Right ventricle myocardium superior (tissue), 1 donor: ENCODE measurements at regions of chr9 and their contacts with region 1.

Region 1: DNA sequence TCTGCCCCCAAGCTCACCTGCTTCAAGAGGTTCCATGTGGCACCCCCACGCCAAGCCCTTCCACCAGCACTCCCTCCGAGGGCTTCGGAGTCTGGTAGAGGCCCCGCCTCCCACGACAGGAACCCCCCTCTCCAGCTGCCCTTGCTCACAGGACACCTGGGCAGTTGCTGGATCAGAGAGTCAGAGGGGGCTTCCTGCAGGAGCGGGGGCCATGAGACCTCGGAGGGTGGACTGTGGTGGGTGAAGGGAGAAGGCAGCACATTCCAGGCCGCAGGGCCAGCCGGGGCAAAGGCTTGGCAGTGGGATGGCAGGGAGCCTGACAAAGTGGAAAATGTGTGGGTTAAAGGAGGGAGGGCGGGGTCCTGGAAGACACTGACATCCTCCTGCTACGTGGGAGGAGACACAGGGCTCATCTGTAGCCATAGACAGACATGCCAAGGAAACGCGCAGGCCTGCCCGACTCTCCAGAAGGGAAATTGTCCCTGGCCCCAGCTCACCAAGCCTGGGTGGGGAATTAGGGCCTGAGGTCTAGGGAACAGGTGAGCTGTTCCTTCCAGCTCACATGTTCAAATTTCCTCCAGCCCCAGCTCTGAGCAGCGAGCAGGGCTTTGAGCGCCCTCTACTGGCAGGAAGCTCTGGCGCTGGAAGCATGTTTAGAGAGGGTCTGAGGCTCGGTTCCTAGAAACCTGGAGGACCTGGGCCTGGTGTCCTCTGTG is 74.2 kb downstream of the NTNG2 start:
- DNase-seq: peak; percentile 85
- ATAC-seq: peak; percentile 38

Region 2: GRCh38 chr9:131018621-131019020 is 1217.5 kb before region 1 on chr9:
- intact Hi-C with region 1: no loop called
- DNase-seq: no peak
- ATAC-seq: no peak

Region 3: GRCh38 chr9:131310833-131311554 is 925.1 kb before region 1 on chr9:
- intact Hi-C with region 1: no loop called
- DNase-seq: no peak
- ATAC-seq: peak; percentile 44

Region 4: GRCh38 chr9:131762356-131762932 is 473.7 kb before region 1 on chr9:
- intact Hi-C with region 1: loop called (anchors 5 kb)
- DNase-seq: peak; percentile 84
- ATAC-seq: peak; percentile 99

Region 5: DNA sequence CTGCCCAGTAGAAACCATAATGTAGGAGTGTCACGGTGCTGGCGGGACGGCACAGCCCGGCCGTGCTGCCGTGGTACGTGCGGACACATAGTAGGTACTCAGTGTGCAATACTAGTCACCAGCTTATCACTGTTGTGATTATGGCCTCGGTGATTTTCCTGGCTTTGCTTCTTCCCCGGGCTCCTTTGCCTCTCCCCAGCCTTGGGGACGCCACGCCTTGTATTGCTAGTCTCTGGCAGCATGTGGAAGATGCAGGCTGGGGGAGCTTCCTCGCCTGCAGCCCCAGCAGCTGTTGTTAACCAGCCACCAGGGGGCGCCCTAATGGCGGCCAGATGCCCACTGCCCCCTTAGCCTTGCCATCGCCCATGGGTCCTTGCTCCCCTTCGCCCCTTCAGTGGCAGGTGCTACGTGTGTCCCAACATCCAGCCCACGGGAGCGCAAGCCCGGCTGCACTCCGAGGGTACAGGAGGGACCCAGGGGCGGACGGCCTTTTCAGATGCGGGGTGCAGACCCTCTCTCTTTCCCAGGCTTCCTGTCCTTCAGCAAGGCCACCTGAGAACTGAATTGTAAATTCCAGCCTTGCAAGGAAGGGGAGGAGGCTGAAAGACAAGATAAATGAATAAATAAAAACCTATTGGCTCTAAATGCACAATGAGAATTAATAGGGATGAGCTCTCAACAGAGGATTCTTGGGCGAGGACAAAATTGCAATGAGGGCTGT is 66.3 kb before region 1 on chr9:
- intact Hi-C with region 1: loop called (anchors 5 kb)
- DNase-seq: peak; percentile 67
- ATAC-seq: peak; percentile 69